Ovary (tissue), 10 donors: ENCODE measurements at regions of chrX and their contacts with region 1.

Region 1: DNA sequence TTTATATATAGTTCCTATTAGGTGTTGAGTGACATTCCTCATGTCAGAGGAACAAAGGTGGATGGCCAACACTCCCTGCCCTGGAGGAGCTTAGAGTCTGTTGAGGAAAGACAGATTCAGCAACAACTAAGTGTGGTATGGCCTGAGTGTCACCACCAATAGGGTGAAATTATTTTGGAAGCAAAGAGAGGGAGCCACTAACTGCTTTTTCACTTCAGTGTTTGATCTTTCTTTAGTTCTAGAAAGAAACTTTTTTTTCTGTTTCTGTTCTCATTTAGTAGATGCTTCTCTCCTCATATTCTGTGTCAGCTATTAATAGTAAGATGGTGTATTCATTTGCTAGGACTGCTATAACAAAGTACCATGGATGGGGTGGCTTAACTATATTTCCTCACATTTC is 81.5 kb downstream of the ARX start:
- DNase-seq: no peak
- H3K4me3 ChIP-seq: no peak overlapping the region
- H3K27ac ChIP-seq: no peak overlapping the region
- H3K4me1 ChIP-seq: no peaks in the 10 kb centered on the region
- H3K27me3 ChIP-seq: no peaks in the 10 kb centered on the region
- CTCF ChIP-seq: no peak
- EP300 ChIP-seq: no peak
- POLR2A ChIP-seq: no peak

Region 2: DNA sequence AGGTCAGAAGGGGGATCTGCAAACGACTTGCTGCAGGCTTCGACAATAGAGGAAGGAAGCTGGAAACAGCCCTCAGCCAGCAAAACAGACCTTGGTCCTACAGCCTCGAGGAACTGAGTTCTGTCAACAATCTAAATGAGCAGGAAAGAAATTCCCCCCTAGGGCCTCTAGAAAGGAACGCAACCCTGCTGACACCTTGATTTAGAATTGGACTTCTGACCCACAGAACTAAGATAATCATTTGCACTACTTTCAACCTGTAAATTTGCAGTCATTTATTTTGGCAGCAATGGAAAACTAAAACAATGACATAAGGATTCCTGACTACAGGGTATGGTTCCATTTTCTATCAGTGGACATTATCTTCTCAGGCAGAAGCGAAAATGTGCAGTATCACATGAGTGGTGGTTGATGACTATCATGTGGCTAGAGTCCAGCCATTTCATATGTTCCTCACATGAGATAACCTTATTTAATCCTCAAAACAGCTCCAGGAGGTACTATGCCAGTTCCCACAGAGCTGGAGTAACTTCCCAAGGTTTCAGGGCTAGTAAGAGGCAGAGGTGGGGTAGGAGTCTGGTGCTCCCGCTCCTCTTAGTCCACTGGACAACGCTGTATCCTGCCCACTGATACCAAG is 1089.7 kb before region 1 on chrX:
- intact Hi-C with region 1: loop called in 1 of 4 experiments (anchors 5 kb)
- DNase-seq: no peak
- H3K4me3 ChIP-seq: no peak overlapping the region
- H3K27ac ChIP-seq: peak overlapping the region in 1 of 2 donors; percentile 25
- H3K4me1 ChIP-seq: no peaks in the 10 kb centered on the region
- H3K27me3 ChIP-seq: no peaks in the 10 kb centered on the region
- CTCF ChIP-seq: no peak
- EP300 ChIP-seq: no peak
- POLR2A ChIP-seq: no peak

Region 3: GRCh38 chrX:24732766-24733500 is 201.3 kb before region 1 on chrX:
- intact Hi-C with region 1: no loop called
- DNase-seq: no peak
- H3K4me3 ChIP-seq: no peak overlapping the region
- H3K27ac ChIP-seq: no peak overlapping the region
- H3K4me1 ChIP-seq: no peaks in the 10 kb centered on the region
- H3K27me3 ChIP-seq: no peaks in the 10 kb centered on the region
- CTCF ChIP-seq: no peak
- EP300 ChIP-seq: no peak
- POLR2A ChIP-seq: no peak

Region 4: GRCh38 chrX:24890677-24891076 is 43.6 kb before region 1 on chrX:
- intact Hi-C with region 1: no loop called
- DNase-seq: no peak
- H3K4me3 ChIP-seq: no peak overlapping the region
- H3K27ac ChIP-seq: no peak overlapping the region
- H3K4me1 ChIP-seq: no peaks in the 10 kb centered on the region
- H3K27me3 ChIP-seq: no peaks in the 10 kb centered on the region
- CTCF ChIP-seq: no peak
- EP300 ChIP-seq: no peak
- POLR2A ChIP-seq: no peak